ENCODE measurements at regions of chr7 and their contacts with region 1.

Region 1: DNA sequence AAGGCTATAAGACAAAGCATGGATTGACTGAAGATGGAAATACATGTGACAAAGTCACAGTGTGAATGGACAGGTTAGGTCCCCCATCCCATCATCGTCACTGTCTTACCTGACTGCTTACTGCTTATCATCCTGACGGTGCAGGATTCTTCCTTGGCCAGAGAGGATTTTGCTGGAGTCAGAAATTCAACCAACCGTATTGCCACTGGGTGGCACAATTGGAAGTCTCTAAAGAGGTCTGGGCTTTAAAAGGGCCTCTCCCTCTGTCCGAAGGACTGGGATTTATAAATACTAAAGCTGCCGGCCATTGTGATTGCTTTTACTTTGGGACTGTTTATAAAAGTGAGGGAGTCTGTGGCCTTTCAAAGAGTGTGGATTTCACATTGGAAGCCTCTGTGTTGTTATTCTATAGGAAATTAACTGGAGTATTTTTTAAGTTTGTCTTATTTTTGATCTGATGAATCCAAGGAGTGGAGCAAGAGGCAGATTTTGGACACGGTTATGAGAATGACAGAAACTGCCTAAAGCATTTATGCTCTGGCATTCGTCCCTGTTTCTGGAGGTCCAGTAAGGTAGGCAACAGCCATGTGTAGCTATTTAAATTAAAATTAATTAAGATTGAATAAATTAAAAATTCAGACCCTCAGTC is 113.3 kb upstream of the CREB5 start:
- DNase-seq: peak; percentile 60
- H3K4me3 ChIP-seq: no peak overlapping the region
- H3K27ac ChIP-seq: no peak overlapping the region
- H3K4me1 ChIP-seq: peaks cover 13% of the 10 kb centered on the region
- H3K27me3 ChIP-seq: no peaks in the 10 kb centered on the region
- CTCF ChIP-seq: peak; percentile 54 to 68

Region 2: DNA sequence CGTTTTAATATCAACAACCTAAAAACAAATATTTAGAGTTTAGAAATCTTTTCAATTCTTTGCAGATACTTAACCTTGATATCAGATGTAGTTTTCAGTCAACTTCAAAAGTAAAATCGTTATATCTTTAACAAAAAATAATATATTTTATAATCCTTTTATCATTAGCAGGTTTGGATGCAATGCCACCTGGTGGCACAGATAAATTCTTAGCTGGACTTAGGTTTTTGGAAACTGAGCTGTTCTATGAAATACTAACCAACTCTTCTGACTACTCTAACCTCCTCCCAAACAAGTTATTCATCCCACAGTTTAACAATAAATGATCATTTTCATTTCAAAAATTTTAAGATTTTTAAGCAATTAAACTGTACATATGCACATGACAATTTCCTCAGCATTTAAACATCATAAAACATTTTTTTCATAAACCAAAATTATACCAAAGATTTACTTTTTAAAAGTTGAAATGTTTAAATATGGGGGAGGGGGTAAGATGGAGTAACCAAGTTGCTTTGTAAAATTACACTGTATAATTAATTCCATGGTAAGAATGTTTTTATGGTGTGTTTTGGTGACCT is 693.2 kb before region 1 on chr7:
- CTCF ChIA-PET with region 1: interaction called, 15 read pairs
- dilution Hi-C with region 1: no loop called
- in situ Hi-C with region 1: no loop called
- intact Hi-C with region 1: no loop called
- DNase-seq: peak; percentile 23
- H3K4me3 ChIP-seq: no peak overlapping the region
- H3K27ac ChIP-seq: no peak overlapping the region
- H3K4me1 ChIP-seq: peaks cover 1% of the 10 kb centered on the region
- H3K27me3 ChIP-seq: no peaks in the 10 kb centered on the region
- CTCF ChIP-seq: peak; percentile 49 to 60

Region 3: GRCh38 chr7:28389504-28390395 is 90.8 kb after region 1 on chr7:
- CTCF ChIA-PET with region 1: interaction called, 3 read pairs
- dilution Hi-C with region 1: no loop called
- in situ Hi-C with region 1: no loop called
- intact Hi-C with region 1: loop called (anchors 5 kb)
- DNase-seq: peak; percentile 58
- H3K4me3 ChIP-seq: peak overlapping the region; percentile 26 to 58 (median 30)
- H3K27ac ChIP-seq: no peak overlapping the region
- H3K4me1 ChIP-seq: peaks cover 9% of the 10 kb centered on the region
- H3K27me3 ChIP-seq: no peaks in the 10 kb centered on the region
- CTCF ChIP-seq: peak; percentile 58 to 65

Region 4: GRCh38 chr7:28536259-28536658 is 237.3 kb after region 1 on chr7:
- CTCF ChIA-PET with region 1: no interaction called
- dilution Hi-C with region 1: no loop called
- in situ Hi-C with region 1: no loop called
- intact Hi-C with region 1: loop called (anchors 1 kb)
- DNase-seq: peak; percentile 55
- H3K4me3 ChIP-seq: no peak overlapping the region
- H3K27ac ChIP-seq: no peak overlapping the region
- H3K4me1 ChIP-seq: peaks cover 6% of the 10 kb centered on the region
- H3K27me3 ChIP-seq: peaks cover 3% of the 10 kb centered on the region
- CTCF ChIP-seq: peak; percentile 78 to 82

Region 5: GRCh38 chr7:28853834-28854749 is 555.1 kb after region 1 on chr7:
- CTCF ChIA-PET with region 1: no interaction called
- dilution Hi-C with region 1: no loop called
- in situ Hi-C with region 1: loop called in 1 of 2 experiments (anchors 10 kb)
- intact Hi-C with region 1: loop called (anchors 2 kb)
- DNase-seq: peak; percentile 69
- H3K4me3 ChIP-seq: peak overlapping the region; percentile 41 to 65 (median 58)
- H3K27ac ChIP-seq: no peak overlapping the region
- H3K4me1 ChIP-seq: peaks cover 35% of the 10 kb centered on the region
- H3K27me3 ChIP-seq: no peaks in the 10 kb centered on the region
- CTCF ChIP-seq: peak; percentile 61 to 93